Dorsolateral prefrontal cortex (tissue), 120 donors: ENCODE measurements at regions of chr2 and their contacts with region 1.

Region 1: DNA sequence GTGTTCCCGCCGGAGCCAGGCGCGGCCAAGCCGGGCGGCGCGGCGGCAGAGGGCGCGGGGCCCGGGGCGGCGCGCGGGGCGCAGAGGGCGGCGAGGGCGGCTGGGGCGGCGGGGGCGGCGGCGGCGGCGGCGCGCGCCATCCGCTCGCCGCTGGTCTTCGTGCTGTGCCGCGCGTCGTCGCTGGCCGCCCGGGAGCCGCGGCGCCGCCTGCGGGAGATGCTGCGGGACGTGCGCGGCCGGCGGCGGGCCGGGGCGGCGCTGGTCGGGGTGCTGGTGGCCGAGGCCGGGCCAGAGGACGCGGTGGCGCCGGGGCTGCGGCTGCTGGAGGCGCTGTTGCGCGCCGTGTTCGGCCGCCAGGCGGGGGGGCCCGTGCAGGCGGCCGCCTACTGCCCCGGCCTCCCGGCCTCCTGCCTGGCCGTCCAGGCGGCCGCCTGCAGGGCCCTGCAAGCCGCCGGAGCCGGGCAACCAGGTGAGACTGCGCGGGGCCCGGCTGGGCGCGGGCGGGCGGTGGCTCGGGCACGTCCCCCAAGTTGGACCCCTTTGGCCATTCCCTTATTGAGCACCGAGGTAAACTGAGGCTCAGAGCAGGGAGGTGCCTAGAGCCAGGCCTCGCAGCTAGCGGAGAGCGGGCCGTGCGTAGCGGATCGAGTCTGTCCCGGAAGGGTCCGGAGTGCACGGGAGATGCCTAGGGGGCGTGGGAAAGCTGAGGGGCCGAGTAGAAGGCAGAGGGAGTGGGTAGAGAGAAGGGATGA is 584 bp downstream of the C2orf72 start:
- DNase-seq: peak in 3 of 10 donors; percentile 58 to 83 (median 73)
- H3K4me3 ChIP-seq: peak overlapping the region; percentile 43 to 81 (median 70)
- H3K27ac ChIP-seq: peak overlapping the region in 58 of 59 donors; percentile 75 to 96 (median 91)
- H3K27me3 ChIP-seq: no peaks in the 10 kb centered on the region
- CTCF ChIP-seq: peak in 20 of 56 donors; percentile 11 to 62 (median 30)

Region 2: DNA sequence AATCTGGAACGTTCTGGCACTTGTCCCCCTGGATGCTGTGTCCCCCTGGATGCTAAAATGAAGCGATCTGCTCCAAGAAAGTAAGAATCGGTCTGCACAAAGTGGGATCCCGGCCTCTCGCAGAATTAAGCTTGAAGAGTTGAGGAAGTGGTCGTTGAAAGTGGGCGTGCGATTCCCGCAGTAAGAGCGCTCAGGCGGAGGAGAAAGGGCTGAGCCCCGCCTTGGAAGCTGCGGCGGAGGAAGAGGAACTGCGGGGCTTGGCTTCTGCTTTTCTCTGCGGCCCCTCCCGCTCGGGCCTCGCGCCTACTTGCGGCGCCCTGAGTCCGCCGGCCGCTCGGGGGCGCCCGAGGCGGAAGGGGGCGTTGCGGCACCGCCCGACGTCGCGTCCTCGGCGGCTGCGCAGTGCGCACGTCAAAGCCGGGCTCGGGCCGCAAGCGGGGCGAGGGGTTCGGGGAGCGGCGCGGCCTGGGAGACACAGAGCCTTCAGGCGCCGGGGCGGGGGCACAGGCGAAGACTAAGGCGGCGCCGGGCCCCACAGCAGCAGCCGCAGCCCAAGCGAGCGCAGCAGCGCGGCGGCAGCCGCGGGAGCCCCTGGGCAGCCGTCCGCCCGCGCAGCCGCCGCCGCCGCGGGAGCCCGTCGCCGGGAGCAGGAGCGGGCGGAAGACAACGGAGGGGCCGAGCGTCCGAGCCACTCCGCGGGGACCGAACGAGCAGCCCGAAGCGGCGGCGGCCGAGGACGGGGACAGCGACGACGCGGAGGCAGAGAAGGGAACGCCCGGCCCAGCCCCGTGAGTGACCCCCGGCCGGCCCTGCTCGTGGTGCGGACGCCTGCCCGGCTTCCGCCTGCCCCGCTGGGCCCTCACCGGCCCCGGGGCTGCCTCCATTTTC is 325.2 kb before region 1 on chr2 and contains the start of gene CAB39:
- intact Hi-C with region 1: loop called in 1 of 2 experiments (anchors 10 kb)
- DNase-seq: peak; percentile 68 to 94 (median 82)
- H3K4me3 ChIP-seq: peak within 1 kb of the TSS; percentile 66 to 99 (median 93)
- H3K27ac ChIP-seq: peak within 1 kb of the TSS; percentile 3 to 95 (median 86)
- H3K27me3 ChIP-seq: no peaks in the 10 kb centered on the region
- CTCF ChIP-seq: peak; percentile 53 to 98 (median 88)
- total RNA-seq, gene CAB39: 57.4 to 149 (median 113) TPM

Region 3: GRCh38 chr2:230864598-230865306 is 173.2 kb before region 1 on chr2 and contains the start of gene ITM2C:
- intact Hi-C with region 1: loop called (anchors 5 to 10 kb)
- DNase-seq: peak in 5 of 10 donors; percentile 60 to 82 (median 72)
- H3K4me3 ChIP-seq: peak within 1 kb of the TSS; percentile 46 to 98 (median 86)
- H3K27ac ChIP-seq: peak within 1 kb of the TSS; percentile 15 to 97 (median 86)
- H3K27me3 ChIP-seq: no peaks in the 10 kb centered on the region
- CTCF ChIP-seq: peak in 46 of 56 donors; percentile 10 to 77 (median 46)
- total RNA-seq, gene ITM2C: 391 to 1,107 (median 596) TPM

Region 4: DNA sequence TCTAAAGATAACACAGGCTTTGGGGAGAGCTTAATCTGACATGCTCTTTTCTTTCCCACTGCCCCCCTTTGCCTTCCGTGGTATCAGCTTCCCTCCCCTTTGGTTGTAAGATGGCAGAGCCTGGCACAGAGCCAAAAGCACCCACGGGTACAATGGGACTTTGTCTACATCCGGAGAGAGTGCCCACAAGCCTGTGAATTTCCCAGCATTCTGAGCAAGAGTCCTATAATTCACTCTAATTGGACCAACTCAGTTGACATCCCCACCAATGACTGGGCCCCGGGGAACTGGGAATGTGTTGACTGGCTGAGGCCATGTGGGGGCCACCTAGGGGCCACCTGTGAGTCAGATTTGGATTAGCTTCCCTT is 20.7 kb before region 1 on chr2:
- intact Hi-C with region 1: loop called in 1 of 2 experiments (anchors 1 kb)
- DNase-seq: peak in 9 of 10 donors; percentile 78 to 96 (median 83)
- H3K4me3 ChIP-seq: peak overlapping the region in 21 of 59 donors; percentile 4 to 45 (median 25)
- H3K27ac ChIP-seq: peak overlapping the region in 53 of 59 donors; percentile 6 to 87 (median 68)
- H3K27me3 ChIP-seq: no peaks in the 10 kb centered on the region
- CTCF ChIP-seq: peak in 32 of 56 donors; percentile 8 to 54 (median 26)

Region 5: GRCh38 chr2:231056453-231057424 is 18.8 kb after region 1 on chr2 and contains the start of gene PSMD1:
- intact Hi-C with region 1: loop called in 1 of 2 experiments (anchors 2 kb)
- DNase-seq: peak; percentile 82 to 94 (median 90)
- H3K4me3 ChIP-seq: peak within 1 kb of the TSS; percentile 63 to 100 (median 96)
- H3K27ac ChIP-seq: peak within 1 kb of the TSS; percentile 87 to 100 (median 98)
- H3K27me3 ChIP-seq: no peaks in the 10 kb centered on the region
- CTCF ChIP-seq: peak; percentile 86 to 99 (median 95)
- total RNA-seq, gene PSMD1: 86.5 to 175 (median 121) TPM

Region 6: DNA sequence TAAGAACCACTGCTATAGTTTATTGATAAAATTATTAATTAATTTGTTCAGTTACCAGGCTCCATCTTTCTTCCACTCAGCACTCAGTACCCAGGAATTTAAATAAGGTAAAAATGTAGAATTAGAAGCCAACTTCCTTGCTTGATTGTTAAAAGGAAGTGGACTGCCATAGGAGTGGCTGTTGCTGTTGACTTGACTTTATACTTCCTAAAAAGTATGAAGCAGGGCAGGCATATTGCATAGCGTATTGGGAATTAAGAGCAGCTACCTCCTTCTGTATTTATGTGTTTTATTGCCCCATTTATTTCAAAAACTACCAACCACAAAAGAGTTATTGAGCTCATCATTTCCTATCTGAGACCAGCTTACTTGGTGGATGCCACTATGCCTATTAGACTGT is 46.7 kb after region 1 on chr2:
- intact Hi-C with region 1: no loop called
- DNase-seq: no peak
- H3K4me3 ChIP-seq: no peak overlapping the region
- H3K27ac ChIP-seq: no peak overlapping the region
- H3K27me3 ChIP-seq: no peaks in the 10 kb centered on the region
- CTCF ChIP-seq: no peak